ENCODE measurements at regions of chr1 and their contacts with region 1.

Region 1: GRCh38 chr1:109499661-109500536 is 6.0 kb downstream of the CYB561D1 start:
- ATAC-seq: peak in 6 of 8 experiments; percentile 15 to 77 (median 32)
- H3K4me3 ChIP-seq: no peak overlapping the region
- H3K27ac ChIP-seq: no peak overlapping the region
- H3K4me1 ChIP-seq: peaks cover 6 to 22% of the 10 kb centered on the region in 2 donors

Region 2: DNA sequence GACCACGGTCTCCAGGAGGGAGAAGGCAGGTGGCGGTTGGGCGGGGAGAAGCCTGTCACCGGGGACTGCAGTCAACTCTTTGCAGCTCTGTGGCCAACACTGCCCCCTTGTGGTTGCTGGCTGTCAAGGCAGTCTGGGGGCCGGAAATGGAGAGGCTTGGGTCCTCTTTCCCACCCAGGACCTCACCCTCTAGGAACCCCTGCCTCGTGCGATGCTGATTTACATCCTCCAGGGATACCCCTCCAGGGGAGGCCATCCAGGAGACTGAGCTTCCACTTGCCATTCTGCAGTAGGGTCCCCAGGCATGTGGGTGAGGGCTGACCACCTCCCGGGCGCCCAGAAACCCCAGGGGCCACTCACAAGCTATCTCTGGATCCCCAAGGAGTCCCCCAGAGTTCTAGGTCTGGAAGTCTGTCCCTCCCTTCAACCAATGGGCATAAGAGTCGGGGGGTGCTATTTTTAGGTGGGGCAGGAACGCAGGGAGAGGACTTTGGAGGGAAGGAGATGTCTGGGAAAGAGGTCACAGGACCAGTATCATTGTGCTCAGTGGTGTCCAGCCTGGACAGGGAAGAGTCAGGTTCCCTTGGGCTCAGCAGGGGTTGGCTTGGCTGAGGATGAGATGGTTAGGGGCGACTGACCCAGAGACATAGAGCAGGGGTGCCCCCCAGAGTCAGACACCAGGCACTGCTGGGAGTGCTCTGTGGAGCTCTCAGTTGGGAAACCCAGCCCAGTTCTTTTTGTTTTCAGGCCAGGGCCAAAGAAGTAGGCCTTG is 32.7 kb after region 1 on chr1:
- in situ Hi-C with region 1: loop called in 2 of 9 experiments (anchors 5 kb)
- ATAC-seq: peak; percentile 76 to 89 (median 82)
- H3K4me3 ChIP-seq: no peak overlapping the region
- H3K27ac ChIP-seq: no peak overlapping the region
- H3K4me1 ChIP-seq: peaks cover 23 to 33% of the 10 kb centered on the region in 2 donors

Region 3: DNA sequence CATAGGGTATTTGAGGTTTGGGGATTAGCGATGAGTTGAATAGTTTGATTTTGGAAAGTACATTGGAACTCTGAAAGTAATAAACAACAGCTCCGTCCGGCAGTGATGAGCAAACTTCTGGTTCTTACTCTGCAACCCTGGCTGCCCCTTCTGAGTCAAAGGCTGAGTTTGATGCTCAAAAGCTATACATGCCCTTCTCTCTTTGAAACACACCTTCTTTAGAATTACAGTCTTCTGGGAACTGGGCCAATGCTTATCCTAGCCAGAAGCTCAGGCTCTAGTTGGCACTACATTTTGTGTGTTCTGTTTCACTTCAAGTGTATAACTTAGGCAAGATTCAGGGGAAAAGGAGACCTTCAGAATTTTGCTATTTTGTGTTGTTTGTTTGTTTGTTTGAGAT is 494.0 kb after region 1 on chr1:
- in situ Hi-C with region 1: no loop called
- ATAC-seq: peak in 1 of 8 experiments; percentile 33
- H3K4me3 ChIP-seq: no peak overlapping the region
- H3K27ac ChIP-seq: no peak overlapping the region
- H3K4me1 ChIP-seq: peaks cover 15 to 27% of the 10 kb centered on the region in 2 donors

Region 4: DNA sequence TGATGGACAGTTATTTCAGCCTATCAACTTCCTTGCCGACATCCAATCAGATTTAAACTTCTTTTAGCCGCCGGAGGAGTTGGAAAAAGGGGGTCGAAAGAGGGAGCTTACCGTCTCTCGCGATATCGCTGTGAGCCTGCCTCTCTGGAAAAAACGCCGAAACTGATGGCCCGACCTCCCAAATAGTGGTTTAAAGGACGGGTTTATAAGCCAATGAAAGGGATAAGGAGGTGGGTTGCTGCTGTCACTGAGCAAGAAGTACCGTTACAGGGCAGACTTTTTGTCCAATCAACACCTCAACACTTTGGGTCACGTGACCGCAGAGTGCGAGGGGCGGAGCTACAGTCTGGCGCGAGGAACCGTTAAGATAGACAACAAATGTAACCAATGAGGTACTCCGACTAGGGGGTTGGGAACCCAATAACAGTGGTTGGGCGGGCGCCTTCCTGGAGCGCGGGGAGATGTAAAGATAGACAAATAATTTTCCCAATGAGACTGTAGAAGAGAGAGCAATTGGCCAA is 839.0 kb after region 1 on chr1 and contains the start of gene RBM15:
- in situ Hi-C with region 1: no loop called
- ATAC-seq: peak; percentile 71 to 85 (median 83)
- H3K4me3 ChIP-seq: peak within 1 kb of the TSS; percentile 59 to 85 (median 73)
- H3K27ac ChIP-seq: peak within 1 kb of the TSS; percentile 91 to 97
- H3K4me1 ChIP-seq: peaks cover 26 to 42% of the 10 kb centered on the region in 2 donors
- total RNA-seq, gene RBM15: 17.9 to 49.7 (median 36.7) TPM